ENCODE measurements at regions of chr18 and their contacts with region 1.

Region 1: GRCh38 chr18:11040823-11041656 is 108.3 kb downstream of the PIEZO2 start:
- DNase-seq: peak; percentile 25
- H3K4me3 ChIP-seq: no peak overlapping the region
- H3K27ac ChIP-seq: no peak overlapping the region
- H3K4me1 ChIP-seq: no peaks in the 10 kb centered on the region
- H3K27me3 ChIP-seq: no peaks in the 10 kb centered on the region
- CTCF ChIP-seq: peak; percentile 44 to 54 (median 48)
- POLR2A ChIP-seq: no peak

Region 2: GRCh38 chr18:10526211-10526949 is 514.7 kb before region 1 on chr18:
- intact Hi-C with region 1: no loop called
- DNase-seq: peak; percentile 24
- H3K4me3 ChIP-seq: peak overlapping the region; percentile 85 to 89
- H3K27ac ChIP-seq: peak overlapping the region; percentile 85 to 92
- H3K4me1 ChIP-seq: no peaks in the 10 kb centered on the region
- H3K27me3 ChIP-seq: no peaks in the 10 kb centered on the region
- CTCF ChIP-seq: no peak
- POLR2A ChIP-seq: no peak

Region 3: DNA sequence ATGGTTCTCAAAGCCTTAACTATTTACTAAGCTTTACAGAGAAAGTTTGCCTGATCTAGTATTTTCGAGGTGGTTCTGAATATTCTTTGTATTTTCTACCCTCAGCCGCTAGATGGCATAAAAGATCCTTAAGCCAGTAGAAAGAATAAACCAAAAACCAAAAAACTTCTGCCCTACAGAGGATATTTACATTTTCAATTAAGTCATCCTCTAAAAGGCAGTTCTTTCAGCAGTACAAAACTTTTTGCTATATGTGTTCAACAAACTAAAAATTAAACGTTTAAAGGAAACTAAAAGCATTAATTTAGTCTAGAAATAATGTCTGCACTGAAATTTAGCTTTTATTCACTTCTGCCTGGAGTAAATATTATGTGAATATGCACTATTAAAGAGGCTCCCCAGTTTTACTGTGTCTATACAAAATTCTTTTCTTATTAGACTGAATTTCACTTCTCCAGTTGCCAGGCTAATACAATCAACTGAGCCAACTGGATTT is 189.2 kb before region 1 on chr18:
- intact Hi-C with region 1: loop called (anchors 5 kb)
- DNase-seq: no peak
- H3K4me3 ChIP-seq: no peak overlapping the region
- H3K27ac ChIP-seq: no peak overlapping the region
- H3K4me1 ChIP-seq: no peaks in the 10 kb centered on the region
- H3K27me3 ChIP-seq: no peaks in the 10 kb centered on the region
- CTCF ChIP-seq: peak in 3 of 4 experiments; percentile 52 to 80 (median 80)
- POLR2A ChIP-seq: no peak